ENCODE measurements at regions of chr5 and their contacts with region 1.

Region 1: DNA sequence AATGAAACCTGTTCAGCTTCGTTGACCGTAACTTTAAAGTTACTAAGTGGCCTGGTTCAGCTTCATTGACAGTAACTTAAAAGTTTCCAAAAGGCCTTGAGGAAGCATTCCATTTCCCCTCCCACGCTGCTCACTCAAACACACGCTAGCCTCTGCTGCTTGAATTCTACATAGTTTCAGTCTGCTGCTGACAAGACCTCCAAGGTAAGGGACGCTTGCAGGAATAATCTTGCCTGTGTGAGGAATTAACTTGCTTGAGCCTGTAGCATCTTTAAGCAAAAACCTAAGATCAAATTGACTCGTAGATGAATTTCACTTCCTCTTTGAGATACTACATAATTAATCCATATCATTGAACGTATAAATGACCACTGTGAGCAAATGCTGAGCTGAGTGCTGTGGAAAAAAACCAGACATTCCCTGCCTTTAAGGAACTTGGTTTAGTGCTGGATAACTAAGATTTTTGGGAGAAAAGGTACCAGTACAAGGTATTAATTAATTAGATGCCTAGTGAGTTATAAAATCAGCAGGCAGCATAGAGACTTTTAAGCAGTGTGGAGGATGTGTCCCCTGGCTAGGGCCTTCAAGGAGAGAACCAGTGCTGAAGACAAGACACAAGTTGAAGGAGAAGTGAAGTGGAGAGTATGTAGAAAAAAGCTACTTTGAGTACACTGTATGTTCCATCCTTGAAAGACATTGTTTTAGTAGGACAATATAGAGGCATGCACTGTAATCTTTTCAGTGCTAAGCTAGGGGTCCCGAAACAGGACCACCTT is 39.2 kb downstream of the GRAMD2B start:
- DNase-seq: no peak
- H3K27ac ChIP-seq: no peak overlapping the region
- CTCF ChIP-seq: no peak

Region 2: DNA sequence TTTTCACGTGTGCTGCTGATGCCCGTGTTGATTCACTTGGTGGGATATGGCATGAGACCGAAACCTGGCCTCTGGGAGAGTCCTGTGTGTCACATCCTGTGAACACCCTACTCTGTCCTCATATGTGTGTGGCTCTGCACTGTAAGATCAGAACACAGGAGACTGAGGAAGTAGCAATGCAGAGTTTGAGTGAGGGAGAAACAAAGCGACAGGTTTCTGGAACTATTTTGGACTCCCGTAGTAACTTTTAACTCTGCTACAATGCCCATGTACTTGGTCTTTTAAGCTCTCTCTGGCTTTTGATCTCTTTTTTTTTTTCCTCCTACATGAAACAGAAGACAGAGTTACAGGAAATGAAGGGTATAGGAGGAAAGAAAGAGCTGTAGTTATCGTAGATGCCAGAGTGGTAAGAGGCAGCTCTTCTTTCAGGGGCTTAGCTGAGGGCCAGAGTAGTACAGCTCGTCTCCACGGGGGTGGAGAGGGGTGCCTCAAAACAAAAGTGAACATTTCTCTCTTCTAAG is 12.6 kb before region 1 on chr5:
- CTCF ChIA-PET with region 1: interaction called, 10 read pairs
- POLR2A ChIA-PET with region 1: no interaction called
- DNase-seq: peak; percentile 64
- H3K27ac ChIP-seq: no peak overlapping the region
- CTCF ChIP-seq: no peak